ENCODE measurements at regions of chr11 and their contacts with region 1.

Region 1: DNA sequence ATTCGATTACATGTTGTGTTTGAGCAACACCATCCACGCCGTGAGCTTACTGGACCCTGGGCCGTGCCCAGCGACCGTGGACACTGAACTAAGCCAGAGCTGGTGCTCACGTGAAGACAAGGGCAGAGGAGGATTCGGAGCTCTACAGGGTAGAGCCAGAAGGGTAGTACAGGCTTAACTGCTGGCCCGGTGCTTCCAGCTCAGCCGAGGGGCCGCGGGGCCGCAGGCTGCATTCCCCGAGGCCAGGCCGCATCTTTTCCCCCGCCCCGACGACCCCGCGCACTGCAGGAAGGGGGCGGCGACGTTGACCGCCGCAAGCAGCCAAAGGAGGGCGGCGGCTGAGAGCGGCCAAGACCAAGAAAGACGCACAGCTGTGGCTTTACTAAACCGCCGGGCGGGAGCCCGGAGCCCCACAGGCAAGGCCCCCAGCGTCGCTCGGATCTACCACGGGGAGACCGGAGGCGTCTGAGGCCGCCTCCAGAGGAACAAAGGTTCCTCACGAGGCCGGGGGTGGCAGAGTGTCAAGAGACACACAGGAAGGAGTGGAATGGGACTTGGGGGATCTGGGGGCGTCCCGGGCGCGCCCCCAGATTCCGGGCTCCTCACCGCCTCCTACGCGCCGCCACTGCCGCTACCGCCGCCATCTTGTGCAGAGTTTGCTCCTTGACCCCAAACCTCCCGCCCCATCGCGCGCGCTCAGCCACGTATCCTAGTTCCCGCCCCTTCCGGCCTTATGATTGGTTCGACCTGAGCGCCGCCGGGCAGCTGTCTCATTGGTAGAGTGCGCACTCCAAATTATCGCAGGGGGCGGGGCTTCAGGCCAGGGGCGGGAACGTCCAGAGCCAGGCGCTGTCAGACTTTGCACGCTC is at the start of gene GANAB:
- DNase-seq: peak; percentile 95 to 99
- ATAC-seq: peak; percentile 97 to 99 (median 97)
- H3K4me3 ChIP-seq: peak within 1 kb of the TSS; percentile 94
- H3K4me3 Mint-ChIP-seq: peak within 1 kb of the TSS; percentile 94
- H3K27ac ChIP-seq: peak within 1 kb of the TSS; percentile 95
- H3K27ac Mint-ChIP-seq: peak within 1 kb of the TSS; percentile 94 to 96
- H3K4me1 ChIP-seq: peaks cover 33% of the 10 kb centered on the region
- H3K4me1 Mint-ChIP-seq: peaks cover 6 to 13% of the 10 kb centered on the region in 2 donors
- H3K27me3 ChIP-seq: no peaks in the 10 kb centered on the region
- H3K27me3 Mint-ChIP-seq: no peaks in the 10 kb centered on the region
- CTCF ChIP-seq: no peak
- total RNA-seq, gene GANAB: 236 to 275 (median 246) TPM

Region 2: DNA sequence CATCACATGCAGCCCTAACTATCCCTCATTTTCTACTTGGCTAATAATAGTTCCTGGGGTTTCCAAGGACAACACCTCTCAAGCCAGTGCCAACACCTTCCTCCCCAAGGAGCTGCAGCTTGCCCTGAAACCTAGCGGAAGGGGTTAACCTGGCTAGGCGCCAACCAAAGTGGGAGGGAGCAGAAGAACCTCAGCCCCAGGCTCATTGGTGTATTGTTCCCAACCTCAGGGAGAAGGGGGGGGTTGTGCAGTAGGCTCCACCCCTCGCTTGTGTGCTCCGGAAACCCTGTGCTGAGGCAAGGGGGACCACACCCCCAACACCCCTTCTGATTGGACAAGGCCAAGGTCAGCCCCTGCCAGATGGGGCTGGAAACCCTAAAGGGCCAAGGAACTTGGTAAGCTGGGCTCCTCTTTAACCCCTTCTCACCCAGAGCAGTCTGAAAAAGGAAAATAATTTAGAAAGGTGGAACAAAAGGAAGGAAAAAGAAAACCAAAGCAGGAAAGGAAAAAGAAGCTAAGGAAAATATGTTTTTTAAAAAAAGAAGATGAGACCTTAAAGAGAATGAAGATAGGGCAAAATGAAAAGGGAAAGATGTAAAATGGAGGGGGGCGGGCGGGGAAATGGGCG is 47.0 kb before region 1 on chr11:
- intact Hi-C with region 1: loop called (anchors 1 kb)
- DNase-seq: peak; percentile 90 to 98
- ATAC-seq: peak; percentile 75 to 87 (median 79)
- H3K4me3 ChIP-seq: peak overlapping the region; percentile 79
- H3K4me3 Mint-ChIP-seq: peak overlapping the region; percentile 97
- H3K27ac ChIP-seq: peak overlapping the region; percentile 83
- H3K27ac Mint-ChIP-seq: peak overlapping the region; percentile 93 to 96
- H3K4me1 ChIP-seq: peaks cover 43% of the 10 kb centered on the region
- H3K4me1 Mint-ChIP-seq: peaks cover 53 to 65% of the 10 kb centered on the region in 2 donors
- H3K27me3 ChIP-seq: no peaks in the 10 kb centered on the region
- H3K27me3 Mint-ChIP-seq: no peaks in the 10 kb centered on the region
- CTCF ChIP-seq: no peak

Region 3: GRCh38 chr11:62621567-62622470 is 24.4 kb before region 1 on chr11 and contains the start of gene B3GAT3:
- intact Hi-C with region 1: loop called (anchors 2 kb)
- DNase-seq: peak; percentile 95 to 99
- ATAC-seq: peak; percentile 86 to 97 (median 89)
- H3K4me3 ChIP-seq: peak within 1 kb of the TSS; percentile 77
- H3K4me3 Mint-ChIP-seq: peak within 1 kb of the TSS; percentile 93
- H3K27ac ChIP-seq: peak within 1 kb of the TSS; percentile 97
- H3K27ac Mint-ChIP-seq: peak within 1 kb of the TSS; percentile 94 to 98
- H3K4me1 ChIP-seq: peaks cover 20% of the 10 kb centered on the region
- H3K4me1 Mint-ChIP-seq: peaks cover 17 to 21% of the 10 kb centered on the region in 2 donors
- H3K27me3 ChIP-seq: no peaks in the 10 kb centered on the region
- H3K27me3 Mint-ChIP-seq: no peaks in the 10 kb centered on the region
- CTCF ChIP-seq: no peak
- total RNA-seq, gene B3GAT3: 64.9 to 80.3 (median 77.9) TPM

Region 4: DNA sequence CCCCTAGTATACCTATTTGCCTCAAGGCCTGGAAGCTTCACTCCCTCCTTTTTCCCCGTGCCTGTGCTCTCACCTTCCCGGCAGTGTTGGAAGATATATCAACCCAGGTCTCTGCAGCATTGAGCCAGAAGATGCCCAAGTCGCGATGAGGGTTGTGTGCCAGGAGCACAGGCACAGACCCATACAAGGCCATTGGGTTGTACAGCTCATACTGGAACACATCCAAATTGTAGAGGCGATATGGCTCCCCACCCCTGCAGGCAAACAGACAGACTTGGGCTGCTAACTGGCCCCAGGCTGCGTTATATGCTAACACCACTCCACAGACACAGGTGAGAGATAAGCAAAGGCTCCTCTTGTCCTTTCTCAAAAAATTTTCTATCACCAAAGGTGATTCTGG is 13.7 kb before region 1 on chr11:
- intact Hi-C with region 1: no loop called
- DNase-seq: no peak
- ATAC-seq: no peak
- H3K4me3 ChIP-seq: no peak overlapping the region
- H3K4me3 Mint-ChIP-seq: no peak overlapping the region
- H3K27ac ChIP-seq: no peak overlapping the region
- H3K27ac Mint-ChIP-seq: peak overlapping the region in 1 of 2 donors; percentile 45
- H3K4me1 ChIP-seq: peaks cover 9% of the 10 kb centered on the region
- H3K4me1 Mint-ChIP-seq: peaks cover 10 to 15% of the 10 kb centered on the region in 2 donors
- H3K27me3 ChIP-seq: no peaks in the 10 kb centered on the region
- H3K27me3 Mint-ChIP-seq: no peaks in the 10 kb centered on the region
- CTCF ChIP-seq: no peak

Region 5: DNA sequence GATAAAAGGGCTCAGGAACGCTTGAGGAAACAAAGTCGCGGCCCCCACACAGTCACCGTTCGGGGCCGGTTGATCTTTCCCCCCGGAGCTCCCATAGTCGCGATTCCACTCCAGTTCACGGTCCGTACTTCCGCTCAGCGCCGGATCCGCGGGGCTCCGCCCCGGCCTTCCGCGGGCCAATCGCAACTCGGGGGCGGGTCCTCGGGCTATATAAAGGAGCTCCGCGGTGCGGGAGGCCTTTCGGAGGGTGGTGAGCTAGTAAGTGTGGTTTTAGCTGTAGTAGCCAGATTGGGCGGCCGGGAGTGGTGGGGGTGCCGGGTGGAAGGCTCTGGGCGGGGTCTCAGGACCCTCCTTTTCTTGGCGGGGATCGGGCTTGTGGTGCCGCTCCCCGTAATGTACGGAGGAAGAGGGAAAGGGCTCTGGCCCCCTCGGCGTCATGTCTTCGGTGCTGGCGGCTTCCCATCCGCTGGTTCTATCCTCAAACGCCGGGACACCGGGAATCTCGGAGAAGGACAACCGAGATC is 18.9 kb after region 1 on chr11 and contains the starts of genes C11orf98 and CSKMT:
- intact Hi-C with region 1: loop called (anchors 2 kb)
- DNase-seq: peak; percentile 96
- ATAC-seq: peak; percentile 92 to 97 (median 95)
- H3K4me3 ChIP-seq: peak within 1 kb of the TSS; percentile 87
- H3K4me3 Mint-ChIP-seq: peak within 1 kb of the TSS; percentile 96
- H3K27ac ChIP-seq: peak within 1 kb of the TSS; percentile 80
- H3K27ac Mint-ChIP-seq: peak within 1 kb of the TSS; percentile 87 to 95
- H3K4me1 ChIP-seq: peaks cover 28% of the 10 kb centered on the region
- H3K4me1 Mint-ChIP-seq: peaks cover 6 to 29% of the 10 kb centered on the region in 2 donors
- H3K27me3 ChIP-seq: no peaks in the 10 kb centered on the region
- H3K27me3 Mint-ChIP-seq: no peaks in the 10 kb centered on the region
- CTCF ChIP-seq: no peak
- total RNA-seq, gene C11orf98: 36.5 to 57.9 (median 39.1) TPM
- total RNA-seq, gene CSKMT: 12.0 to 21.5 (median 13.7) TPM

Region 6: DNA sequence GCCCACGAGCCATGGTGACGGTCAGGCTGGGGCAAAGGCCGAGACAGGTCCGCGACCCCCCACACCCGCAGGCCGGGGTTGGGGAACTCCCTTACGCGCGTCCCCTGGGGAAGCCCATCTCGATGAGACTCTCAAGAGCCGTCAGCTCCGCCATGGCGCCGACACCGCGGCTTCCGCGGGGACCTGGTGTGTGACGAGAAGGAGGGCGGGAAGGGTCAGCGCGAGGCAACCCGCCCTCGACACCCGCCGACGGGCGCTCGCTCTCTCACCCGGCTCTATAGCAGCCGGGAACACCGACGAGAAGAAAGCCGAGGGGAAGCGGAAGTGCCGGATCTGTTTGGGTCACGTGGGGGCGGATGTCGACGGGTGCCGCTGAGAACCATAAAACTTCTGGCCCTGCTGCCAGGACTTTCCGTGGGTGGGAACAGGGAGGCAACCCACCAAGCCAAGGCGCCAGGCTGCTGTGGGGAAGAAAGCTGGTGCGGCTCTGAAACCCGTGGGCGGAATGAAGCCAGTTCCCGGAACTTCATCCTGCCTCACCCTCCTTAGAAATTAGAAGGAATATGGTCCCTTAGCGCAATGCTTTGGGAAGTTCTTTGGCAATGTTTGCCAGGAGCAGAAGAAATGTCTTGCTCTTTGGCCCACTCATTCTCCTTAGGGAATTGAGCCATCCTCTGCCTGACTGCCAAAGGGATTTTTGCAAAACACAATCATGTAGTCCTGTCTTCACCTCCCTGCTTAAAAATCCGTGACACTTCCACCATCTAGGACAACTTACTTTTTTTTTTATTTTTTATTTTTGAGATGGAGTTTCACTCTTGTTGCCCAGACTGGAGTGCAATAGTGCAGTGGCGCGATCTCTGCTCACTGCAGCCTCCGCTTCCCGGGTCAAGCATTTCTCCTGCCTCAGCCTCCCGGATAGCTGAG is 32.8 kb after region 1 on chr11 and contains the start of gene UBXN1:
- intact Hi-C with region 1: no loop called
- DNase-seq: peak; percentile 79 to 92
- ATAC-seq: peak; percentile 85 to 91 (median 89)
- H3K4me3 ChIP-seq: peak within 1 kb of the TSS; percentile 98
- H3K4me3 Mint-ChIP-seq: peak within 1 kb of the TSS; percentile 93
- H3K27ac ChIP-seq: peak within 1 kb of the TSS; percentile 95
- H3K27ac Mint-ChIP-seq: peak within 1 kb of the TSS; percentile 95 to 99
- H3K4me1 ChIP-seq: peaks cover 21% of the 10 kb centered on the region
- H3K4me1 Mint-ChIP-seq: peaks cover 26 to 31% of the 10 kb centered on the region in 2 donors
- H3K27me3 ChIP-seq: no peaks in the 10 kb centered on the region
- H3K27me3 Mint-ChIP-seq: no peaks in the 10 kb centered on the region
- CTCF ChIP-seq: no peak
- total RNA-seq, gene UBXN1: 179 to 238 (median 238) TPM